Activated CD4-positive, alpha-beta memory T cell treated with anti-CD3 and anti-CD28 coated beads, Interleukin-2, amount 10 ng/mL, durations not matched to agents 7 days and 5 days (primary cell): ENCODE measurements at regions of chr10 and their contacts with region 1.

Region 1: DNA sequence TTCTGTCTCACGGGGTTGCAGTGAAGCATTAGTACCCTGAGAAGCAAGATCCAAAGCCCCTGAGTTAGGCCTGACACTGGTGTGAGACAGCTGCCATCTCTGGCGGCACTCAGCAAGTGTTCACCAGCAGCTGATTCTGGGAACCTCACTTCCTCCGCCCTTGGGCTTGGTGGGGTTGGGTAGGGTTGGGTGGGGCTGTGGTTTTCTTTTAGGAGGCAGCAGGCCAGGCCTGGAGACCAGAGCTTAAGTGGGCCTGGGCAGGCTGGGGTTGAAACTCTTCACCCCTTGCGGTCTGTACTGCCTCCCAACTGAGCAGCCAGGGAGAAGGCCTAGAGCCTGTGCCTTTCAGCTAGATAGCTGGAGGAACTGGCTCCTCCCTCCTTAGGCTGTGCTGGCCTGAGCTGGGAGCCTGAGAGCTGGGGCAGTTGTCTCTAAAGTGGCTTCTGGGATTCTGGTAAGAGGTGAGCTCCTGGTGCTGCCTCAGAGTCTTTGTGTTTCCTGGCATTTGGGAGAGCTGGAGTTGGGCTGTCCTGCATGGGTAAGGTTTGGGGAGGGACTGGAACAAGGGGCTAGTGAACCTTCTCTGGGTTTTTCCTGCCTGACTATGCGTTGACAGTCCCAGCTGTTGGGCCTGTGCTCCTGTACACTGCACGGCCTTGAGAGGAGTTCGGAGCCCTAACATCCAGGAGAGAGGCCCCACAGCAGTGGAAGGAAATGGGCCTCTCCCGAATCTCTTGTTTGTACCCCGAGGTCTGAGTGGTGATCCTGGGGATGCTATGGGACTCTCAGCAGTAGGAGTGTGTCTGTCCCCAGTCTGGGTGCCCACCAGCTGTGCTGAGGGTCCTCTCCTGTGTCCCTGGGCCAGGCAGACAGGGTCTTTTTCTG is 5.2 kb downstream of the TSPAN14 start:
- DNase-seq: peak; percentile 88
- H3K4me3 Mint-ChIP-seq: peak overlapping the region; percentile 94
- H3K27ac Mint-ChIP-seq: peak overlapping the region; percentile 97
- H3K4me1 Mint-ChIP-seq: peaks cover 85% of the 10 kb centered on the region
- H3K27me3 Mint-ChIP-seq: no peaks in the 10 kb centered on the region

Region 2: GRCh38 chr10:80472234-80473095 is 13.2 kb after region 1 on chr10:
- CTCF ChIA-PET with region 1: interaction called, 82 read pairs
- POLR2A ChIA-PET with region 1: interaction called, 182 read pairs
- DNase-seq: peak; percentile 50
- H3K4me3 Mint-ChIP-seq: peak overlapping the region; percentile 36
- H3K27ac Mint-ChIP-seq: peak overlapping the region; percentile 83
- H3K4me1 Mint-ChIP-seq: peaks cover 86% of the 10 kb centered on the region
- H3K27me3 Mint-ChIP-seq: no peaks in the 10 kb centered on the region

Region 3: GRCh38 chr10:80493522-80494051 is 34.3 kb after region 1 on chr10:
- CTCF ChIA-PET with region 1: interaction called, 414 read pairs
- POLR2A ChIA-PET with region 1: interaction called, 404 read pairs
- DNase-seq: no peak
- H3K4me3 Mint-ChIP-seq: peak overlapping the region; percentile 15
- H3K27ac Mint-ChIP-seq: peak overlapping the region; percentile 76
- H3K4me1 Mint-ChIP-seq: peaks cover 97% of the 10 kb centered on the region
- H3K27me3 Mint-ChIP-seq: no peaks in the 10 kb centered on the region

Region 4: DNA sequence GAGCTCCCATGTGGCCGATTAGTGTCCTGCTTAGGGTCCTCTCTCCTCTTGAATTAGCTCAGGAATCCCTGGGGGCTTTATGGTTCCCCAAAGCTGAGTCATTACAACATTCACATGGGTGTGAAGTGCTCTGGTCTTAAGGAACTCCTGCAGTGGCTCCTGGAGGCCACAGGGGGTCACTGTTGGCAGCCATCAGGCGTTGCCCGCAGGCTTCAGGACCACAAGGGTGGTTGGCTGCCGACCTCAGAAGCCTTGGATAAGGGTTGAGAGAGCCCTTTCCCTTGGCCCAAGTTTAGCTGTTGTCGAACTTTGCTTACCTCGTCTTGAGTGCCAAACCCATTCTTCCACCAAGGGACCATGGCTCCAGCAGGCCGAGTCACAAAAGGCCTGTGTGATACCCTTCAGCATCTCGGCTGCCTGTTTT is 140.1 kb after region 1 on chr10:
- CTCF ChIA-PET with region 1: no interaction called
- POLR2A ChIA-PET with region 1: no interaction called
- DNase-seq: peak; percentile 42
- H3K4me3 Mint-ChIP-seq: no peak overlapping the region
- H3K27ac Mint-ChIP-seq: no peak overlapping the region
- H3K4me1 Mint-ChIP-seq: no peaks in the 10 kb centered on the region
- H3K27me3 Mint-ChIP-seq: no peaks in the 10 kb centered on the region